KBM-7 (cell line): ENCODE measurements at regions of chr11 and their contacts with region 1.

Region 1: DNA sequence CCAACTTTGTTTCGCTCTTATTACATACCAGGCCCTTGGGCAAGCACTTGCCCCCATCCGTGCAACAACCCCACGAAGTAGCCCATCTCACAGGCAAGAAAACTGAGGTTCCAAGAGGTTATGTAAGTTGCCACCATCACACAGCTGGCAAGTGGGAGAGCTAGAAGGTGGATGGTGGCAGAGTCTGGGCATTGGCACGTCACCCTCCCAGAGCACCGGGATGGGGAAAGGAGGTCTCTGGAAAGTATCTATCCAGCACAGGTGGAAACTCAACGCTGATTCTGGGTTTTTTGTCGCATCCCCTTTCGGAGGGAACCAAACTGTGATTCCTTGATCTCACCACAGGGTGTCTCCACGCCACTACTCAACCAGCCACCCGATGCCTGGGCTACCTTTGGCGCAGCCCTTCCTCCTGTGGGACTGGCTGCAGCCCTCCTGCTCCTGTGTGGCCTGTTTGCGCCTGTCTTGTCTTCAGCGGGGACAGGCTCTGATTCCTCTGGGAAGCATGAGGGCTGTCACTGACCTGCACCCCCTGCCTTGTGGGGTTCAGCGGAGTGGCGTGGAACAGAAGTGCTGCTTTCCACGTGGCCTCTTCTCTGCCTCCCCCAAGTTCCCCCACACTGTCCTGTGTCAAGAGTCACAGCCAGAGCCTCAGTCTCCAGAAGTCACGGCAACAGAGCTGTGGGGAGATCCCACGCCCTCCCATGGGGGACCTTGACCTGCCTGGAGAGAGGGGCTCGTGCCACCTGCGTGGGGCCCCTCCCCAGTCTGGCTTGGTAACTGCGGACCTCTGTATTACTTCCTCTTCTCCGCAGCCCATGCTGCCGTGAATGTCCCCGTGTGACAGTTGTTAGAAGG is 34.4 kb upstream of the TRIM29 start:
- DNase-seq: peak; percentile 78

Region 2: GRCh38 chr11:119236490-119236889 is 935.8 kb before region 1 on chr11:
- in situ Hi-C with region 1: no loop called
- DNase-seq: no peak

Region 3: GRCh38 chr11:120229451-120230424 is 57.5 kb after region 1 on chr11:
- in situ Hi-C with region 1: loop called (anchors 10 kb)
- DNase-seq: peak; percentile 67

Region 4: DNA sequence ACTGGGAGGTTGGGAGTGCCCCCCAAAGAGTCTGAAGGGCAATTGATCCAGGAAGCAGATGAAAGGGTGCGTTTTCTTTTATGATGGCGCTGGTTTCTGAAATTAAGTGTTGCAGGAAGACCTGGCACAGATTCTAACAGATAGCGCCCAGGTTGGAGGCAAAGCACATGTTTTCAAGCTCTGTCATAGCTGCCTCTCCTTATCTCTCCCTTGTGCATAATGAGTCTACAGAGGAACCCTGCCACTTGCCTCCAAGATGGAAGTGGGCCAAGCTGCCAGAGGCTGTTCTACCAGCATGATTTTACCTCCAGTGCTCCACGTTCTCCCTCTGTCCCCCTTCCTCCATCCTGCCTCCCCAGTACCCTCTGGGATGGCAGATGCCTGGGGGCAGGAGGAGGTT is 122.8 kb after region 1 on chr11:
- in situ Hi-C with region 1: loop called (anchors 10 kb)
- DNase-seq: no peak

Region 5: GRCh38 chr11:120517390-120517761 is 345.1 kb after region 1 on chr11:
- in situ Hi-C with region 1: no loop called
- DNase-seq: no peak